GM12878 (cell line): ENCODE measurements at regions of chr7 and their contacts with region 1.

Region 1: DNA sequence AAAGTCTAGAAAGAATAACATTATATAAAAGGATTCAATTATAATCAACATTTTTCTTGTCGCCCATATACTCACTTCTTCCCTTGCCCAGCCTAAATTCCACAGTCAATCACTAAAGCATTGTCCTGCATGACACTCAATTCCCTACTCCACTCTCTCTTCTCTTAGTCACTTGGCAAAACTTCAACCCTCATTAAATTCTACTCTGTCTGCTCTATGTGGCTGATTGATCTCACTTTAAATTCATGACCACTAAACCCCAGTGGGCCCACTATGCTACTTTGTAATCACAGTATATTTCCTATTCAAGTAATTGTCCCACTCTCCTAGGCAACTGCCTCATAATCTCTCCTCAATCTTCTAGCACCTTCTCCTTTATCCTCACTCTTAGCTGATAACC is 54.1 kb downstream of the MTERF1 start:
- DNase-seq: no peak
- ATAC-seq: no peak
- H3K4me3 ChIP-seq: no peak overlapping the region
- H3K27ac ChIP-seq: no peak overlapping the region
- H3K4me1 ChIP-seq: no peaks in the 10 kb centered on the region
- H3K27me3 ChIP-seq: no peaks in the 10 kb centered on the region; a peak in 1 of 4 replicates
- CTCF ChIP-seq: no peak
- EP300 ChIP-seq: no peak
- POLR2A ChIP-seq: no peak
- RAD21 ChIP-seq: no peak

Region 2: DNA sequence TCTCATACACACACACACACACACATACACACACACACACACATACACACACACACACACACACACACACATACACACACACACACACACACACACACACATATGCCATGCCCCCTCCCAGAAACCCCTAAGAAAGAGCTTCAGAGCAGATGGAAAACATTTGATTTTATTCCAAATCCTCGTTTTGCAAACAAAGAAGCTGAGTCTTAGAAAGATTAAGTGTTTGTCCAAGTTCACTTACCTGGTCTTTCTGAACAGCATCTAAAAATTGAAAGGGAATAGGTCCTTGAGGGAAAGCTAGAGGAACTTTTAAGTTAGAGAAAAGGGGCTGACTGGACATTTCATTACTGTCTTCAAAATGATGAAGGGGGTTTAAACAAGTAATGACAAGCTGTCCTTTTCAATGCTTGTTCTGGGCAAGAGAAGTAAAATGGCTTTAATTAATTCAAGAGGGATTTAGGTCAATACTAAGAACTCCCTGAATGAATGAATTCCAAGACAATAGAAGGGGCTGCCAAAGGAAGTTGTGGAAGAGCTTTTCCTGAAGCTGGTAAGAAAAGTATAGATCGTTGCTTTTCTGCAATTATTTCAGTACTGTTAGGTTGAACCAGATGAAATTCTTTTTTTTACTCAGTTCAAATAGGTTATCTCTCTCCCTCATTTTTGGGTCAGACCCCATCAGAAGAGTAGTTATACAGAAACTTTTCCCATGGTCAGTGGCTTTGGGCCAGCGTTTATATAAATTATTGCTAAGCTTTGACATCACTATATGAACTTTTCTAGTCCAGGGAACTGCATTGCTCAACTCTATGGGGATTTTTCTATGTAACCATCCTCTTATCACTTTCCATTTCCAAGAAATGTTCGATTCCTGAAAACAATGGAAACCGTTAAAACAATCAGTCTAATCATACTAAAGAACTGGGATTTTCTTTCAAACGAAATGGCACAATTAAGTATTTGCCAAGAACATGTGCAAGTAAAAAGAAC is 207.3 kb before region 1 on chr7:
- CTCF ChIA-PET with region 1: no interaction called
- POLR2A ChIA-PET with region 1: no interaction called
- RAD21 ChIA-PET with region 1: no interaction called
- SMC1A ChIA-PET with region 1: no interaction called
- in situ Hi-C with region 1: no loop called
- intact Hi-C with region 1: no loop called
- DNase-seq: no peak
- ATAC-seq: no peak
- H3K4me3 ChIP-seq: no peak overlapping the region
- H3K27ac ChIP-seq: no peak overlapping the region
- H3K4me1 ChIP-seq: no peaks in the 10 kb centered on the region
- H3K27me3 ChIP-seq: no peaks in the 10 kb centered on the region
- CTCF ChIP-seq: no peak
- EP300 ChIP-seq: no peak
- POLR2A ChIP-seq: no peak
- RAD21 ChIP-seq: no peak

Region 3: GRCh38 chr7:91843831-91844230 is 17.5 kb after region 1 on chr7:
- CTCF ChIA-PET with region 1: interaction called, 25 read pairs
- POLR2A ChIA-PET with region 1: no interaction called
- RAD21 ChIA-PET with region 1: interaction called, 3 read pairs
- SMC1A ChIA-PET with region 1: interaction called, 4 read pairs
- in situ Hi-C with region 1: no loop called
- intact Hi-C with region 1: no loop called
- DNase-seq: peak; percentile 5
- ATAC-seq: peak; percentile 85
- H3K4me3 ChIP-seq: no peak overlapping the region
- H3K27ac ChIP-seq: no peak overlapping the region
- H3K4me1 ChIP-seq: peaks cover 8% of the 10 kb centered on the region; the same call in 1 of the 2 replicates
- H3K27me3 ChIP-seq: no peaks in the 10 kb centered on the region
- CTCF ChIP-seq: no peak
- EP300 ChIP-seq: no peak
- POLR2A ChIP-seq: no peak
- RAD21 ChIP-seq: no peak